Heart right ventricle (tissue), 16 donors: ENCODE measurements at regions of chr12 and their contacts with region 1.

Region 1: DNA sequence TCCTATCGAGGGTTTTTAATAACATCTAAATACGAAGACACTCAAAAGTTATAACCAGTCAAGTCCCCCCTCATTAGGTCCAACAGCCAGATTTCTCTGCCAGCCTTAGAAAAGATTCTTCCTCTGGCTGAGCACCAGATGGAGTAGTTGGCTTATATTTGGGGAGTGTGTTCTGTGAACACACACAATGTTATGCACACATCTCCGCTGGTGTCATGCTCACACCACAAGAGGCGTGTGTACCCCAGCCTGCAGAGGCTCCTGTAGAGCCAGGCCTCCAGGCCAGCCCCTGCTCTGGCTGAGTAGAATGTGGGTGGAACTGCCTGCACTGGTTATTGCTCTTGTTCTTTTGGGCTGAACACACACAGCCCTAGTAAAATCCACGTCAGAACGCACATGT is 64.0 kb downstream of the PIWIL1 start:
- DNase-seq: no peak
- ATAC-seq: peak in 3 of 8 donors; percentile 47 to 70 (median 51)
- H3K4me3 ChIP-seq: no peak overlapping the region
- H3K27ac ChIP-seq: no peak overlapping the region
- H3K4me1 ChIP-seq: no peaks in the 10 kb centered on the region
- H3K27me3 ChIP-seq: peaks cover 0 to 47% (median 19%) of the 10 kb centered on the region in 7 donors
- CTCF ChIP-seq: peak in 7 of 9 donors; percentile 22 to 57 (median 45)

Region 2: GRCh38 chr12:130240831-130241590 is 160.7 kb before region 1 on chr12:
- intact Hi-C with region 1: no loop called
- DNase-seq: no peak
- ATAC-seq: no peak
- H3K4me3 ChIP-seq: no peak overlapping the region
- H3K27ac ChIP-seq: no peak overlapping the region
- H3K4me1 ChIP-seq: no peaks in the 10 kb centered on the region
- H3K27me3 ChIP-seq: peaks cover 0 to 26% (median 0%) of the 10 kb centered on the region in 7 donors
- CTCF ChIP-seq: no peak

Region 3: DNA sequence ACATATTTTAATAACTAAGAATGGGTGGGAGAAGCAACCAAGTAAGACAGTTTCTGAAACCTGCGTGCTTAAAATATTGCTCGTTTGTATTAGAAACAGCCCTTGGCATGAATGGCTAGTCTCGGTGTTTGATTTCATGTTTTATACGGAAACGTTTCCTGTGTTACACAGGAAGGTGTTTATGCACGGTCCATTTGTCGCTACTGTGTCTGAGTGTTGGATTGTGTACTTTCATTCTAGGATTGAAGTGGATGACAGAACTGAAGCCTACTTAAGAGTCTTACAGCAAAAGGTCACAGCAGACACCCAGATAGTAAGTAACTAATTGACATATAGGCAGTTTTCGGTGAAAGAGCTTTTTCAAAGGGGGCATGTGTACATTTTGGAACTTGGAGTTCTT is 44.5 kb before region 1 on chr12:
- intact Hi-C with region 1: loop called in 1 of 10 experiments (anchors 5 kb)
- DNase-seq: no peak
- ATAC-seq: no peak
- H3K4me3 ChIP-seq: no peak overlapping the region
- H3K27ac ChIP-seq: no peak overlapping the region
- H3K4me1 ChIP-seq: no peaks in the 10 kb centered on the region
- H3K27me3 ChIP-seq: peaks cover 3 to 53% (median 30%) of the 10 kb centered on the region in 7 donors
- CTCF ChIP-seq: no peak

Region 4: GRCh38 chr12:130428116-130428515 is 26.4 kb after region 1 on chr12:
- intact Hi-C with region 1: no loop called
- DNase-seq: no peak
- ATAC-seq: no peak
- H3K4me3 ChIP-seq: no peak overlapping the region
- H3K27ac ChIP-seq: no peak overlapping the region
- H3K4me1 ChIP-seq: no peaks in the 10 kb centered on the region
- H3K27me3 ChIP-seq: peaks cover 0 to 7% (median under 1%) of the 10 kb centered on the region in 7 donors
- CTCF ChIP-seq: no peak

Region 5: DNA sequence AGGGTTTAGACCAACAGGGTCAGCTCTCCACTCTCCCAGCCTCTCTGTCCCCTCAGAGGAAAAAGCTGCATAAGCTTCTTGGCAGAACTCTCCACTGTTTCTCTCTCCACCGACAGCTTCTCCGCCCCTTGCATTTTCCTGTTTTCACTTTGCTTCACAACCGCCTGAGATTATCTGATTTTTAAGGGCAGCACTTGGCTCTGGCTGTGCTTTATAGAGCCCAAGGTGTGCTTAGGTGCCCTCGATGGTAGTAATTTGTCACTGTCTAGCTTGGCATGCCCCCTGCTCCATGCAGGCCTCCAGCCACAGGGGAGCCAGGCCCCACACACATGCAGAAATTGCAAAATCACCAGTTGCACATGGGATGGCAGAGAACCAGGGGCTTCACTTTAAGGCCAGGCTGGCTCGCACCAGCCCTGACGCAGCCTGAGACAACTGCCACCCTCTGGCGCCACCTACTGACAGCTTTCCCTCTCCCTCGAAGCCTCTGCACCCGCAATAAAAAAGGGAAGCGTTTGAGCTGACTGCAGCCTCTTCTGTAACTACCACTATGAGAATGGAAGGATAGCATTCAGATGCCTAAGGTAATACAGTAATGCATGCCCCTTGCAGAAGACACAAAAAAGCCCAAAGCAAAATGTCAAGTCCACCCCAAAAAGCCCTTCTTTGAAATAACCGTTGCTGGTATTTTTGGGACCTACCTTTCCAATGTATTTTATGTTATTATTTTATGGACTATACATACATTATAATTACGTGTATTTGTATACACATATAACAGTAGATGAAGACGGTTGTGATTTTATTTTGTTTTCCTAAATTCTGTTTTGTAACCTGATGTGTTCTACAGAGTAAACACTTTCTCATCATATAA is 346.4 kb after region 1 on chr12:
- intact Hi-C with region 1: loop called (anchors 1 to 5 kb)
- DNase-seq: peak; percentile 75 to 79
- ATAC-seq: peak; percentile 79 to 95 (median 85)
- H3K4me3 ChIP-seq: no peak overlapping the region
- H3K27ac ChIP-seq: no peak overlapping the region
- H3K4me1 ChIP-seq: peaks cover 0 to 4% (median 0%) of the 10 kb centered on the region in 9 donors
- H3K27me3 ChIP-seq: peaks cover 0 to 61% (median 30%) of the 10 kb centered on the region in 7 donors
- CTCF ChIP-seq: peak; percentile 67 to 88 (median 85)

Region 6: GRCh38 chr12:130813436-130813835 is 411.7 kb after region 1 on chr12:
- intact Hi-C with region 1: loop called in 1 of 10 experiments (anchors 5 kb)
- DNase-seq: no peak
- ATAC-seq: no peak
- H3K4me3 ChIP-seq: no peak overlapping the region
- H3K27ac ChIP-seq: no peak overlapping the region
- H3K4me1 ChIP-seq: peaks cover 0 to 3% (median 2%) of the 10 kb centered on the region in 9 donors
- H3K27me3 ChIP-seq: no peaks in the 10 kb centered on the region
- CTCF ChIP-seq: no peak

Region 7: DNA sequence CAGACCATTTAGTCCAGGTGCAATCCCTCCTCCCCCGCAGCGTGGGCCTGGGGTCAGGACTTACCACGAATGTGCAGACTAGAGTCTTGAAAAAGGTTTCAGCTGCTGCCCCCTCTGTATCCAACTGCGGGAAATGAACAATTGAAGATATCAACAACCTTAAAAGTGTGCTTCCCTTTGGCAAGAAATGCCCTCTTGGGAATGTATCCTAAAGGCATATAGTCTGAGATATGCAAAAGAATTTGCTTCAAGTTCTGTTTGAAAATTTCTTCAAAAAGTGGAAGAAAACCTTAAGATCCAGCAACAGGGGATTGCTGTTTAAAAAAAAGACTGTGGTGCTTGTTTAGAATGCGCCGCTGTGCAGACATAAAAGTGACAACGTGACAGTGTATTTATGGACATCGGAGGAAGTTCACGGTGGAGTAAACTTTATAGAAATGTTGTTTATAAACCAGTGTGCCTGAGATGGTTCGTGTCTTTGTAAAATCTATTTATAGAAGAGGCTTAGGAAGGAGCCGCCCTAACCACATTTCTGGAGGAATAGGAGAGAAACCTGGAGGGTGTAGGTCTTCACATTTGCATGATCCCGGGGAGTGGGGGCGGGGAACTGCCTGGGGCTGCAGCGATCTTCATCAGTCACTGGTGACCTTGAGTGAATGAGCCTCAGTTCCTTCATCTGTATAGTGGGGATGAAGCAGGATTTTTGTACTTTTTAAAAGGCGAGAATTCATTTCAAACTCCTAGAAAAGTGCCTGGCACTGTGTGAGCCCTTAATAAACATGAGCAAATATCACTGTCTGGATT is 579.4 kb after region 1 on chr12:
- intact Hi-C with region 1: no loop called
- DNase-seq: no peak
- ATAC-seq: no peak
- H3K4me3 ChIP-seq: no peak overlapping the region
- H3K27ac ChIP-seq: no peak overlapping the region
- H3K4me1 ChIP-seq: peaks cover 0 to 41% (median 14%) of the 10 kb centered on the region in 9 donors
- H3K27me3 ChIP-seq: no peaks in the 10 kb centered on the region
- CTCF ChIP-seq: no peak